HAP-1 (cell line): ENCODE measurements at regions of chr3 and their contacts with region 1.

Region 1: DNA sequence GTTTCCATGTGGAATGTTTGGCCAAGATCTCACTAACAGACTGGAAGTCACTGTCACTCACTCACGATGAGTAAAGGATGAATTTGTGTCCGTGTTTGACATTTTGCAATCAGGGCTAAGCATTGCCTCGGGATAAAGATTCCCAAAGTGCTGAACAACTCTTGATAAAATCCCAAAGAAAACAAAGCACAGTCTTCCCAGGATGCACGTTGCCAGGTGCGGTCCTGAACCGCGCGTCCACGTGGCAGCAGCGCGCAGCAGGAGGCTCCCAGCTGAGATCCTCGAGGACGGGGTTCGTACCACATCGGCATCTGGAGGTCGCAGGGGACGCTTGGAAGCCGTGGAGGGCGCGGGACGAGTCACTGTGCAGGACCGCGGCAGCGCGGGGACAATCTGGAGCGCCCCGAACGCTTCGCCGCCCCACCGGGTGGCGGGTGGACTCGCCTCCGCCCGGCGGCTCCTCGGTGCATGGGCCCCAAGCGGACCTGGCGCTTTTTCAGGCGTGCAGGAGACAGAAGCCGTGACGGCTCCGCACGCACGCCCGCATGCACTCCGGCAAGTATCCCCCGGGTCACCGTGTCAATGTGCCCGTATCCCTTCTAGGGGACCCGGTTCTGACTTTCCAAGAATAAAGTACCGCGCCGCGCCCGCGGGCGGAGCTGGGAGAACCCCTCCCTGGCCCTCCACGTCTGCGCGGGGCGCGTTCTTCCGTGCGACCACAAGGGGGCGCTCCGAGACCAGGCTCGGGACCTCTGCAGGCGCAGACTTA is 17.7 kb downstream of the CPN2 start:
- DNase-seq: peak; percentile 80 to 94
- H3K4me3 ChIP-seq: peak overlapping the region; percentile 43
- H3K4me1 ChIP-seq: no peaks in the 10 kb centered on the region
- H3K27me3 ChIP-seq: no peaks in the 10 kb centered on the region

Region 2: DNA sequence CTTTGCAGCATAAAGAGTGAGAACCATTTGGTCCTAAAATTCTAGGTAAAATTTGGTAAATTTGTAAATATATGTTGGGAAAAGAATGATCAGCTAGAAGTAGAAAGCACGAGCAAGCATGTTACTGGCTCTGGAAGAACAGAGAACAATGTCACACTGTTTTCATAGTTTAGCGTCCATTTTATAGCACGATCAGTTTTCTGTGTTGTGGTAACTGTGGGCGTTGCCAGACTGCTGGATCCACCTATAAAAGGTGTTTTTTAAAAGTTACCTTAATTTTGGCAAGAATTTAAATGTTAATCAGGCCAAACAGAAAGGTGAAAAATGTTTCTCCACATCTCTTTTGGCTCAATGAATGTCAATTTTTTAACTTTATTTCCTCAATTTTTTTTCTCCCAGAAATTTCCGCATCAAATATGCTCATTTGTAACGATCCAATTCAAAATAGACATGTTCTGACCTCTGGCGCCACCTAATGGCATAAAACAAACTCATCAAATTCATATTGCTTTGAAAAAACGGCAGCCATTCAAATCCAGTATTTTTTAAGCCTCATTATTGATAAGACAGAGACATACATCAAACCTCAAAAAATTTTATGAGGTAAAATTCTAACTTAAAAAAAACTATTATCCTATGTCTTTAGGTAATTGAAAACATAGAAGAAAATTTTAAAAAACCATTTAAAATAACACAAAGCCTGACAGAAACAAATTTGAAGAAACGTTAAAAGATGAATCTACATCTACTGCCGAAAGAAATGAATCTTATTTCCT is 71.2 kb after region 1 on chr3:
- in situ Hi-C with region 1: loop called (anchors 5 kb)
- DNase-seq: peak; percentile 57 to 68
- H3K4me3 ChIP-seq: no peak overlapping the region
- H3K4me1 ChIP-seq: no peaks in the 10 kb centered on the region
- H3K27me3 ChIP-seq: no peaks in the 10 kb centered on the region

Region 3: DNA sequence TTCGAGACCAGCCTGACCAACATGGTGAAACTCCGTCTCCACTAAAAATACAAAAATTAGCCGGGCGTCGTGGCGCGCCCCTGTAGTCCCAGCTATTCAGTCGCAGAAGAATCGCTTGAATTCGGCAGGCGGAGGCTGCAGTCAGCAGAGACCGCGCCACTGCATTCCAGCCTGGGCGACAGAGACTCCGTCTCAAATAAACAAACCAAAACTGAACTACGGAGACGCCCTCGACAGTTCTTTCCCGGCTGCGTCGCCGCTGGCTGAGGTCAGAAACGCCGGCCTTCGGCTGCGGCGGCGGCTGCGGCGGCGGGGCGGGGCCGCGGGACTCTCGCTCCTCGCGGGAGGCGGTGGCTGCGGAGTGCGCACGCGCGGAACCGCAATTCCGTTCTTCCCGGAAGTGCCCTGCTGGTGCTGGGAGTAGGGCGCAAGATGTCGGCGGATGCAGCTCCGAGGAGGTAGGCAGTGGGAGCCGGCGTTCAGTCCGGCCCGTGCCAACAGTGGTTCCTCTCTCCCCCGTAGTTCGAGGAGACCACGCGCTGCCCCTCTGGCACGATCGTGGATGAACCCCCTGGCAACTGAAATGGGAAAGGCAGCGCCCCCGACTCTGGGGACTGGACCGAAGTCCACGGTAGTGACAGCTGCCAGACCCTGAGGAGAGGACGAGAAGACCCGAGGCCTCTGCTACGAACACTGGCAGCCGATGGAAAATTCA is 250.4 kb after region 1 on chr3:
- in situ Hi-C with region 1: loop called (anchors 10 kb)
- DNase-seq: peak; percentile 66 to 93
- H3K4me3 ChIP-seq: peak overlapping the region; percentile 91
- H3K4me1 ChIP-seq: peaks cover 13% of the 10 kb centered on the region
- H3K27me3 ChIP-seq: no peaks in the 10 kb centered on the region